ENCODE measurements at regions of chr1 and their contacts with region 1.

Region 1: GRCh38 chr1:157841708-157842107 is at the start of gene CD5L:
- DNase-seq: no peak
- ATAC-seq: no peak
- total RNA-seq, gene CD5L: 2.5 TPM

Region 2: DNA sequence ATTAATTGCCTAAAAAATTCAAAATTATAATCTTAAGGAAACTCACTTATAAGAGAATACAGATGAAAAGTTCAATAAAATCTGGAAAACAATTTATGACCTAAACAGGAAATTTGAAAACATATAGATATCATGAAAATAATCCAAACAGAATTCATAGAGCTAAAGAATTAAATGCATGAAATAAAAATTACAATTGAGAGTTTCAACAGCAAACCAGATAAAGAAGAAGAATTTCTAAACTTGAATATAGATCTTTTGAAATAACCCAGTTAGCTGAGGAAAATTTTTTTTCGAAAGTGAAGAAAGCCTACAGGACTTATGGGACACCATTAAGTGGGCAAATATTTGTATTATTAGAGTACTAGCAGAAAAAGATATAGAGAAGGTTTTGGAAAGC is 28.4 kb before region 1 on chr1:
- intact Hi-C with region 1: loop called (anchors 2 kb)
- DNase-seq: no peak
- ATAC-seq: no peak

Measured in Right ventricle myocardium inferior (tissue), 1 donor.